ENCODE measurements at regions of chr10 and their contacts with region 1.

Region 1: DNA sequence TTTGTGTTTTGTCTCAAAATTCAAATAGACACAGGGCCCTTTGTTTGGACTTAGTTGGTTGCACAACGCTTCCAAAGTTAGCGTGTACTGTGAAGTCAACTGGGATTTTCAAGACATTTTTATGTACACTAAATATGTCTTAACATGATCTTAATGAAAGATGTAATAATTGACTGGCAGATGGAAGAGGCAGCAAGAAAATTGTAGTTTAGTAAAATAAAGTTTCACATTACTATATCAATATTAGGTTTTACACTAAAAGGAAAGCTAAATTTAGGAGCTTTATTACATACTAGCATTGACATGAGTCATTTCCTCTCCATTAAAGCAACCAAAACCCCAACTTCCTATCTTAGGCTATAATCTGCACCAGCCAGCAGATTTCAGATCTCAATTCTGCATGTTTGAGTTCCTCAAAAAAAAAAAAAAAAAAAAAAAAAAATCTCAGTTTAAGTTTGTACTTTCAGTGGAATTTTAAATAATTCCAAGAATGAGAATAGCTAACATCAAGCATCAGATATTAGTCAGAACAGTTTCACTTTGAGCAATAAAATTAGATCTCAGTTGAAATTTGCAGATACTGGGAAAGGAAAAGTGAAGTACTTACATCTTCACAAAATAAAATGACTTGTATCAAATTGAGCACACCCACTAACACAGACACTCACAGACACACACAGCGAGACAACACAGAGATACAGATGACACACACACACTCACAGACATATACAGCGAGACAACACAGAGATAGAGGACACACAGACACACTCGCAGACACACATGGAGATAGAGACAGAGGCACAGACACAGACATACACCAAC is 346.6 kb upstream of the KLF6 start:
- DNase-seq: peak; percentile 44
- ATAC-seq: peak; percentile 85
- H3K4me3 Mint-ChIP-seq: no peak overlapping the region
- H3K27ac Mint-ChIP-seq: no peak overlapping the region
- H3K4me1 Mint-ChIP-seq: peaks cover 41% of the 10 kb centered on the region
- H3K27me3 Mint-ChIP-seq: peaks cover 11% of the 10 kb centered on the region

Region 2: DNA sequence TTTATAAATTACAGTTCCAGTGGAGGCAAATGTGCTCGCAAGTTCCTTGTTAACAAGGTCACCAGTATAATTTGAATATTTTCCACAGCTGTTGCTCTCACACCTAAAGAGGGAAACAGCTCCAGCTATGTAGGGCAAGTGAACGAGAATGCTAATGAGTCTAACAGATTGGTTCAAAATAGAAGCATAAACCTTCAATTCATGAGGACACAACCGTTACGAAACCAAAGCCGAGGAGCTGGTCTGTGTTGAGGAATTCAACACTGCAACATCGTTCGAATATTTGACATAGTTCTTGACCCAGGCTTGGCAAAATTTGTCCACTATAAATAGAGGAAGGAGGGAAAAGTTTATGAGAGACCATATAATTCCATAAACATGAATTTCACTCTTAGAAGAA is 507.9 kb before region 1 on chr10:
- CTCF ChIA-PET with region 1: no interaction called
- POLR2A ChIA-PET with region 1: no interaction called
- intact Hi-C with region 1: loop called in 1 of 2 experiments (anchors 5 kb)
- DNase-seq: no peak
- ATAC-seq: no peak
- H3K4me3 Mint-ChIP-seq: no peak overlapping the region
- H3K27ac Mint-ChIP-seq: peak overlapping the region; percentile 14
- H3K4me1 Mint-ChIP-seq: peaks cover 30% of the 10 kb centered on the region
- H3K27me3 Mint-ChIP-seq: no peaks in the 10 kb centered on the region

Region 3: DNA sequence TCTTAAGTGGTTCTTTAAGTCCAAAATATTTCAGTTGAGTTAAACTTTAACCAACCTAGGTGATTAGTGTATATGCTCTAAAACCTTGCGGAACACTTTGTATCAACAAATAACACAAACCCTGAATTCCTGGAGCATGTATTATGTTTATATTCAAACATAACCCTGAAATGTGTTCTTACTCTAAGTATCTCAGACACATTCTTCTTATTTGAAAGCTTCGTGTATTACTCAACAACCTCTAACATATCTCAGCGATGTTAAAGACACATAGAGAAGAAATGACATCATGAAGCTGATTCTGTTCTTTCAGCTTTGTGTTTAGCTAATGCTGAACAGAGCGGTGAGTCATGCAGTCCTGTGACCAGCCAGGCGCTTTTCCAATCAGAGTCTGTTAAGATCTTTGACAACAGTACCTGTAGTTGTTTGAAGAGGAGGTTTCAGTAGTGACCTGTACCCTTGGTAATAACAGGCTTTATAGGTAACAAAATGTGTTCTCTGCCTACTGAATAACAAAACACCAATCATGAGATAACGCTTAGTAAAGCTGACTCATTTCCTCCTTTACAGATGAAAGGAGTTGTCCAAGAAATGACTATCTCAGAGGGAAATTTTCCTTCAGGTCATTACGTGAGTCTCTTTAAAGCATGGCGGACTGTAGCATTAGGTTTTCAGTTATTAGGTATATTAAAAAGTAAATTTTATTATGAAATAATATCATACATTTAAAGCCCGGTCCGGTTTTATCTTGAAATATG is 279.3 kb before region 1 on chr10:
- CTCF ChIA-PET with region 1: no interaction called
- POLR2A ChIA-PET with region 1: no interaction called
- intact Hi-C with region 1: loop called (anchors 1 kb)
- DNase-seq: peak; percentile 83
- ATAC-seq: peak; percentile 93
- H3K4me3 Mint-ChIP-seq: peak overlapping the region; percentile 34
- H3K27ac Mint-ChIP-seq: peak overlapping the region; percentile 94
- H3K4me1 Mint-ChIP-seq: peaks cover 48% of the 10 kb centered on the region
- H3K27me3 Mint-ChIP-seq: no peaks in the 10 kb centered on the region

Region 4: DNA sequence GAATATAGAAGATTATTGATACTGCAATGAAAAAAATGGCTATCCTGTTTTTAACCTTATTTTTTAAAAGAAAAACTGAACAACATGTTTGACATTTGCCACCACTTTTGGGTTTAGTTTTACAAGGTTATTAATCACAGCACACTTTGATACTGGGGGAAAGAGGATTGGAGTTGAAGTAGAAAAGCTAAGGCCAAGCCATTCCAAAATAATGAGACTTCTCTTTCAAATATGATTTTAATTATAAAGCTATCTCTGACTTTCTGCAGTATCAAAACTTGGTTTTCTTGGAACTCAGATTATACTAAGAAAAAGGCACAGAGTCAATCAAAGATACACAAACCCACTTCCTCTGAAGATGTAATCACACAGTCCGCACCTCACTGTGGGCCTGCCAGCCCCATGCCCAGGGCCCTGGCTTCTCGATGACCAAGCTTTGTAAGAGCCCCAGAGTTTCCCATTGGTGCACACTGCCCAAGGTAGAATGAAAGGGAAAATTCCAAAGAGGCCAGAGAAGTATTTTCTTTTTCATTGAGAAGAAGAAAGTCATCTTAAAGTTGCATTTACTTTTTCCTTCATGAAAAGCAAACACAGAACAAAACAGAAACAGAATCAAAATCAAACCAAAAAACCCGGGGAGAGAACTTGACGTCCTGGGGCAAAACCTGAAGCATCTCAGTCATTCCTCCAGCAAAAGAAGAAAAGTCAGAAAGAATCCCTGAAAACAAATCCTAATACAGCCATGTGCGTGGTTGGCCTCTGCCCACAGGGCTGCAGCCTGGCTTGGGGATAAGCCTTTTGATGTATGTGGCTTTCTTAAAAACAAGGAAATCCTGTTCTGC is 158.9 kb before region 1 on chr10:
- CTCF ChIA-PET with region 1: no interaction called
- POLR2A ChIA-PET with region 1: no interaction called
- intact Hi-C with region 1: loop called in 1 of 2 experiments (anchors 5 kb)
- DNase-seq: peak; percentile 63
- ATAC-seq: peak; percentile 88
- H3K4me3 Mint-ChIP-seq: peak overlapping the region; percentile 52
- H3K27ac Mint-ChIP-seq: peak overlapping the region; percentile 93
- H3K4me1 Mint-ChIP-seq: peaks cover 48% of the 10 kb centered on the region
- H3K27me3 Mint-ChIP-seq: no peaks in the 10 kb centered on the region

Region 5: GRCh38 chr10:4241724-4242345 is 110.2 kb after region 1 on chr10:
- CTCF ChIA-PET with region 1: no interaction called
- POLR2A ChIA-PET with region 1: no interaction called
- intact Hi-C with region 1: loop called (anchors 1 to 10 kb)
- DNase-seq: no peak
- ATAC-seq: no peak
- H3K4me3 Mint-ChIP-seq: no peak overlapping the region
- H3K27ac Mint-ChIP-seq: no peak overlapping the region
- H3K4me1 Mint-ChIP-seq: peaks cover 35% of the 10 kb centered on the region
- H3K27me3 Mint-ChIP-seq: no peaks in the 10 kb centered on the region

Region 6: DNA sequence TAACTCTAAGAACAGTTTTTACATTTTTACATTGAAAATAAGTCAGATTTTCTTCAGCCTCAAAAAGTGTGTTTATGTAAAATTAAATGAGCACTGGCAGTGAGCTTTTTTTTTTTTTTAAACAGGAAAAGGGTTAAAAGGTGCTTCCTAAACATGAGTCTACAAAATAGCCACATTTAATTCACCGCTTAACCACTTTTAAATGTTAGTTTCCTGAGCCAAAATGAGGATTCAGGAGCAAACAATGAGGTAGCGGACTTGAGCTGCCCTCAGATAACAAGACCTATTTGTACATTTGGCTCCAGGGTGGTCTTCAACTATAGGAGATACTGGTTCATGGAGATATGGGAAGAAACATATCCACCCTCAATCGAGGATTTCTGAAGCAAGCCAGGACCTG is 985.4 kb after region 1 on chr10:
- CTCF ChIA-PET with region 1: no interaction called
- POLR2A ChIA-PET with region 1: no interaction called
- intact Hi-C with region 1: no loop called
- DNase-seq: no peak
- ATAC-seq: no peak
- H3K4me3 Mint-ChIP-seq: no peak overlapping the region
- H3K27ac Mint-ChIP-seq: no peak overlapping the region
- H3K4me1 Mint-ChIP-seq: no peaks in the 10 kb centered on the region
- H3K27me3 Mint-ChIP-seq: peaks cover 3% of the 10 kb centered on the region

Measured in activated CD4-positive, alpha-beta T cell treated with anti-CD3 and anti-CD28 coated beads for 36 hours (primary cell).